Activated CD8-positive, alpha-beta T cell treated with anti-CD3 and anti-CD28 coated beads, Interleukin-2, amount 10 ng/mL, durations not matched to agents 7 days and 5 days (primary cell): ENCODE measurements at regions of chr1 and their contacts with region 1.

Region 1: GRCh38 chr1:19596714-19597495 is 47.2 kb upstream of the NBL1 start:
- DNase-seq: peak; percentile 99
- ATAC-seq: peak; percentile 84
- H3K4me3 Mint-ChIP-seq: peak overlapping the region; percentile 91
- H3K27ac Mint-ChIP-seq: peak overlapping the region; percentile 98
- H3K4me1 Mint-ChIP-seq: peaks cover 41% of the 10 kb centered on the region
- H3K27me3 Mint-ChIP-seq: no peaks in the 10 kb centered on the region

Region 2: DNA sequence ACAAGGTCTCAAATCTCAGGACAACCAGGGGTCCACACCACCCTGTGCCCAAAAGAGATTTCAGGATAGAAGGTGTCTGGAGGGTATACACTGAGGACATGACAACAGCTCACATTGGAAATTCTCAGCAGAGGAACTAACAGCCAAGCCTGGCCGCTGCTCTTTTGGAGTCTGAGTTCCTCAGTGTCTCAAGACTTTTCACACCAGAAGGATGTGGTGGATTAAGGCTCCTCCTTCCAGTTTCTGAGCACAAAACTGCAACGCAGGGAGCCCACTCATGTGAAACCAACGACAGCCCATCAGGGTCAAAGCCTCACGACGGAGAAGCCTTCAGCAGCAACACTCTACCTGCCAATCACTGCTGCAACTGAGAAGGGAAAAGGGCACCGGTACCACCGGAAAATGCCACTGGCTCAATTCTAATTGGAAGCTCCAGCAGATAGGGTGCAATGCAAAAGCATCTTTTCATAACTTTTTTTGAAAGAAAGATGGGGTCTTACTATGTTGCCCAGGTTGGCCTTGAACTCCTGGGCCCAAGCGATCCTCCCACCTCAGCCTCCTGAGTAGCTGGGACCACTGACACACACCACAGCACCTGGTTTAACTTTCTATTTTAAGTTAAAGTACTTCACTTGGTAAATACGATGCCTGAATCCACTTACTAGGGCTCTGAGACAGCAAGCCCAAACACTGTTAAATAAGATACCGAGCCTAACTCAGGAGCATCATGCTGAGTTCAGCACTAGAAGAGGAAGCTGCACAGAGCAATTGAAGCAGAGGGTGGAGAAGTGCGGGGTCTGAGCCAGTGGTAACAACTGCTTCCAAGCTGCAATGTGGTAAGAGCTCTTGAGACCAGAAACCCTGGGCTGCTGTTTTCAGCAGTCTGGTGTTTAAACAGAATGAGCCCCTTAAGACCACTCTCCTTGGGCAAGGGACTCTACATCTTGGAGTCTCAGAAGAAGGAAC is 119.3 kb before region 1 on chr1:
- CTCF ChIA-PET with region 1: no interaction called
- POLR2A ChIA-PET with region 1: interaction called, 10 read pairs
- DNase-seq: peak; percentile 81
- ATAC-seq: peak; percentile 79
- H3K4me3 Mint-ChIP-seq: peak overlapping the region; percentile 73
- H3K27ac Mint-ChIP-seq: peak overlapping the region; percentile 95
- H3K4me1 Mint-ChIP-seq: peaks cover 95% of the 10 kb centered on the region
- H3K27me3 Mint-ChIP-seq: no peaks in the 10 kb centered on the region

Region 3: GRCh38 chr1:19582302-19582701 is 14.6 kb before region 1 on chr1:
- CTCF ChIA-PET with region 1: interaction called, 23 read pairs
- POLR2A ChIA-PET with region 1: interaction called, 4 read pairs
- DNase-seq: peak; percentile 82
- ATAC-seq: peak; percentile 99
- H3K4me3 Mint-ChIP-seq: no peak overlapping the region
- H3K27ac Mint-ChIP-seq: no peak overlapping the region
- H3K4me1 Mint-ChIP-seq: peaks cover 10% of the 10 kb centered on the region
- H3K27me3 Mint-ChIP-seq: peaks cover 7% of the 10 kb centered on the region

Region 4: GRCh38 chr1:19606817-19607642 is 10.1 kb after region 1 on chr1:
- CTCF ChIA-PET with region 1: interaction called, 8 read pairs
- POLR2A ChIA-PET with region 1: interaction called, 23 read pairs
- DNase-seq: peak; percentile 83
- ATAC-seq: peak; percentile 79
- H3K4me3 Mint-ChIP-seq: peak overlapping the region; percentile 40
- H3K27ac Mint-ChIP-seq: peak overlapping the region; percentile 37
- H3K4me1 Mint-ChIP-seq: peaks cover 44% of the 10 kb centered on the region
- H3K27me3 Mint-ChIP-seq: no peaks in the 10 kb centered on the region

Region 5: GRCh38 chr1:19643602-19644394 is 46.9 kb after region 1 on chr1 and contains the start of gene NBL1:
- CTCF ChIA-PET with region 1: interaction called, 21 read pairs
- POLR2A ChIA-PET with region 1: interaction called, 21 read pairs
- DNase-seq: peak; percentile 82
- ATAC-seq: peak; percentile 87
- H3K4me3 Mint-ChIP-seq: peak within 1 kb of the TSS; percentile 93
- H3K27ac Mint-ChIP-seq: peak within 1 kb of the TSS; percentile 93
- H3K4me1 Mint-ChIP-seq: peaks cover 44% of the 10 kb centered on the region
- H3K27me3 Mint-ChIP-seq: peaks cover 14% of the 10 kb centered on the region
- total RNA-seq, gene NBL1: 40.1 TPM

Region 6: DNA sequence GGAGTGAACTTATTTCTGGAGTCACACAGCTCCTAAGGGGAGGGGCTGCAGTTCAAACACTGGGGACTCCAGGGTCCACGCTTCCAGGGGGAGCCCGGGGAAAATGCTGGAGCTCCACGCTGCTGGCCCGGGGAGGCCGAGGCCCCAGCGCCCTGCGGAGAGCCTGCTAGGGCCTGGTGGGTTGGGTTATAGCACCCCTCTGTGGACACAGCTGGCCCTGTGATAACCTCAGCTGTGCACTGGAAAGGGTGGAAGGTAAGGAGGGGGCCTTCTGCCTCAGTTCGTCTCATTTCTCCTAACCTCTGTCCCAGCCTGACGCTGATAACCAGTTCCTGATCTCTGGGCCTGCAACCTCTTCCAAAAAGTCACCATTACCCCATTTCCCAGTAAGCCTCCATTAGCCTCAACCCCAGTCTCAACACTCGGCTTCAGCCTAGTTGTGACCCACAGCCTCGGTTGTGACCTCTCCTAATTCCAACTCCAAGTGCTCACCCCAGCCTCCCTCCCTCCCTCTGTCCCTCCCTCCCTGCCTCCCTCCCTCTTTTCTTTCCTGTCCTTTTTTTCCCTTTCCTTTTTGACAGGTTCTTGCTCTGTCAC is 54.3 kb after region 1 on chr1:
- CTCF ChIA-PET with region 1: interaction called, 21 read pairs
- POLR2A ChIA-PET with region 1: interaction called, 11 read pairs
- DNase-seq: peak; percentile 59
- ATAC-seq: peak; percentile 59
- H3K4me3 Mint-ChIP-seq: no peak overlapping the region
- H3K27ac Mint-ChIP-seq: peak overlapping the region; percentile 22
- H3K4me1 Mint-ChIP-seq: peaks cover 26% of the 10 kb centered on the region
- H3K27me3 Mint-ChIP-seq: no peaks in the 10 kb centered on the region

Region 7: GRCh38 chr1:19661721-19662228 is 64.9 kb after region 1 on chr1:
- CTCF ChIA-PET with region 1: interaction called, 13 read pairs
- POLR2A ChIA-PET with region 1: interaction called, 4 read pairs
- DNase-seq: peak; percentile 64
- ATAC-seq: no peak
- H3K4me3 Mint-ChIP-seq: no peak overlapping the region
- H3K27ac Mint-ChIP-seq: no peak overlapping the region
- H3K4me1 Mint-ChIP-seq: peaks cover 13% of the 10 kb centered on the region
- H3K27me3 Mint-ChIP-seq: peaks cover 32% of the 10 kb centered on the region